K562 (cell line): ENCODE measurements at regions of chr17 and their contacts with region 1.

Region 1: GRCh38 chr17:4833178-4833940 is at the start of gene MINK1:
- DNase-seq: peak; percentile 96 to 98 (median 98)
- ATAC-seq: peak; percentile 86
- H3K4me3 ChIP-seq: peak within 1 kb of the TSS; percentile 81
- H3K27ac ChIP-seq: peak within 1 kb of the TSS; percentile 71
- H3K4me1 ChIP-seq: peaks cover 25 to 37% of the 10 kb centered on the region in 2 experiments; a peak in 4 of 5 replicates
- H3K27me3 ChIP-seq: no peaks in the 10 kb centered on the region
- CTCF ChIP-seq: no peak
- EP300 ChIP-seq: no peak
- POLR2A ChIP-seq: 0 out of 2 replicates have a peak, but pooled peaks have one; percentile 53
- RAD21 ChIP-seq: no peak
- polyA plus RNA-seq, gene MINK1: 0.11 to 0.28 TPM

Region 2: GRCh38 chr17:4796553-4796921 is 36.8 kb before region 1 on chr17:
- CTCF ChIA-PET with region 1: no interaction called
- POLR2A ChIA-PET with region 1: interaction called, 6 read pairs
- in situ Hi-C with region 1: no loop called
- intact Hi-C with region 1: loop called (anchors 1 kb)
- DNase-seq: peak; percentile 50 to 60 (median 52)
- ATAC-seq: peak; percentile 88
- H3K4me3 ChIP-seq: peak overlapping the region; percentile 97
- H3K27ac ChIP-seq: peak overlapping the region; percentile 82
- H3K4me1 ChIP-seq: peaks cover 0 to 5% of the 10 kb centered on the region in 2 experiments; a peak in 2 of 5 replicates
- H3K27me3 ChIP-seq: no peaks in the 10 kb centered on the region
- CTCF ChIP-seq: no peak
- EP300 ChIP-seq: no peak
- POLR2A ChIP-seq: no peak
- RAD21 ChIP-seq: no peak

Region 3: GRCh38 chr17:4895657-4896331 is 62.4 kb after region 1 on chr17:
- CTCF ChIA-PET with region 1: no interaction called
- POLR2A ChIA-PET with region 1: no interaction called
- in situ Hi-C with region 1: no loop called
- intact Hi-C with region 1: no loop called
- DNase-seq: peak; percentile 22 to 32 (median 29)
- ATAC-seq: peak; percentile 71
- H3K4me3 ChIP-seq: no peak overlapping the region
- H3K27ac ChIP-seq: no peak overlapping the region
- H3K4me1 ChIP-seq: peaks cover 0 to 19% of the 10 kb centered on the region in 2 experiments; a peak in 2 of 5 replicates
- H3K27me3 ChIP-seq: no peaks in the 10 kb centered on the region
- CTCF ChIP-seq: peak; percentile 19 to 29 (median 23); a peak in 3 of 6 replicates
- EP300 ChIP-seq: no peak
- POLR2A ChIP-seq: no peak
- RAD21 ChIP-seq: no peak